ENCODE measurements at regions of chr14 and their contacts with region 1.

Region 1: GRCh38 chr14:97602438-97603117 is 805.4 kb downstream of the VRK1 start:
- DNase-seq: peak; percentile 83 to 94 (median 88)
- H3K4me3 ChIP-seq: peak overlapping the region; percentile 5 to 21
- H3K4me3 Mint-ChIP-seq: no peak overlapping the region
- H3K27ac ChIP-seq: peak overlapping the region; percentile 72
- H3K27ac Mint-ChIP-seq: no peak overlapping the region
- H3K4me1 ChIP-seq: peaks cover 69% of the 10 kb centered on the region
- H3K4me1 Mint-ChIP-seq: peaks cover 4 to 41% (median 19%) of the 10 kb centered on the region in 4 donors
- H3K27me3 ChIP-seq: no peaks in the 10 kb centered on the region
- H3K27me3 Mint-ChIP-seq: no peaks in the 10 kb centered on the region

Region 2: DNA sequence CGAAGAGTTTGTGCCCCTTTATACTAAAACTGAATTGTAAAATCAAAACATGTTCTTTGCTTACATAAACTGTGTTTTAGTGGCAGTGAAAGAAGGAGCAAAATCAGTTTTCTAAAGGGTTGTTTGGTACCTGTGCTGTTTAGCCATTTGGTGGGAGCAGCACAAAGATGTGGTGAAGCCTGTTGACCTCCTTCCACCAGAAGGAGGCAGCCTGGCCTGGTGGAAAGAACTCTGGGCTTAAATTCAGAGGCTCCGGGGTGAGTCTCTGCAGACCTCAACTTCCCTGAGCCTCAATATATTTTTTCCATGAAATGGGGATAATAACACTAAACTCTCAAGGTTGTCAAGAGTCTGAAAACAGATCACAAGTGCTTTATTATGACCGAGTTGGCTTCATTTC is 302.9 kb before region 1 on chr14:
- CTCF ChIA-PET with region 1: interaction called, 4 read pairs
- POLR2A ChIA-PET with region 1: interaction called, 4 read pairs
- intact Hi-C with region 1: loop called (anchors 2 kb)
- DNase-seq: peak in 4 of 5 donors; percentile 21 to 36 (median 24)
- H3K4me3 ChIP-seq: no peak overlapping the region
- H3K4me3 Mint-ChIP-seq: no peak overlapping the region
- H3K27ac ChIP-seq: no peak overlapping the region
- H3K27ac Mint-ChIP-seq: no peak overlapping the region
- H3K4me1 ChIP-seq: no peaks in the 10 kb centered on the region
- H3K4me1 Mint-ChIP-seq: peaks cover 0 to 27% (median 9%) of the 10 kb centered on the region in 4 donors
- H3K27me3 ChIP-seq: no peaks in the 10 kb centered on the region
- H3K27me3 Mint-ChIP-seq: peaks cover 2 to 5% of the 10 kb centered on the region in 2 donors

Region 3: DNA sequence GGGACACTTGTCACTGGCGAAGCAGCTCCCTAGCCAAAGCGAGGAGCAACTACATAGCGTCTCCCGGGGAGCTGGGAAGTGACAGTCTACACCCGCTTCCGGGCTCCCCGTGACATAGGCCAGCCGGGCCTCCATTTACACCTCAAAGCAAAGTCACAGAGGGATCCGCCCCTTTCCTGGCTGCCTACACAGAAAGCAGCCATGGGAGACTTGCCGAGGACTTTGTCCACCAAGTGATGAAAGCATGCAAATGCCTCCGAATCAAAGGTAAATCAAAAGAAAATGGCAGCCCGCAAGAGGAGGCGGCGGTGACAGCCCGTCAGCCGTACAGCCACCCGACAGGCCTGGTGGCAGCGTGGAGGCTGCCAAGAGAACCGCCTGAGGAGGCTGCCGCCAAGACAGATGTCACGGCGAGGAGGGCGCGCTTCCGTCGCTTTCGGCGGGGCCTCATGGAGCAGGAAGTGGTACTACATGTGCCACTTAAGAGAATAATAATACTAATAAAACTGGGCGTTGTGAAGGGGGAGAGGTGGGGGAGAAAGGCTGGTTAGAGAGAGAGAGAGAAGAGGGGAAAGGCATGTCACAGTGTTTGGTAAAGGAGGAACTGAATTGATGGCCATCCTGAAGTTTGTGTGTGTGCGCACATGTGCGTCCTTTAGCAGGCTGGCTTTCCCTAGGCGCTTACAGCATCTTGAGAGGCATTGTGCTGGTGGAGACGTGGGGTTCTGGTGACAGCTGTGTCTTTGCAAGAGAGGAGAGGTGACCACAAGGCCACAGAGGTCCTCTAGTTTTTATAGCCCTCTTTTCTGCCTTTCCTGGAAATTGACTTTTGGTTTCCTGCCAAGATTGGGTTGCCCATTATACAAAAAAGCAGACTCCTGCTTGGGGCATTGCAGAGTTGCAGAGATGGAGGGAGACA is 143.7 kb before region 1 on chr14:
- CTCF ChIA-PET with region 1: interaction called, 10 read pairs
- POLR2A ChIA-PET with region 1: interaction called, 53 read pairs
- intact Hi-C with region 1: loop called (anchors 1 kb)
- DNase-seq: peak; percentile 82 to 91 (median 85)
- H3K4me3 ChIP-seq: peak overlapping the region; percentile 50 to 69
- H3K4me3 Mint-ChIP-seq: peak overlapping the region; percentile 89 to 97 (median 94)
- H3K27ac ChIP-seq: peak overlapping the region; percentile 70
- H3K27ac Mint-ChIP-seq: peak overlapping the region; percentile 91 to 99 (median 97)
- H3K4me1 ChIP-seq: peaks cover 45% of the 10 kb centered on the region
- H3K4me1 Mint-ChIP-seq: peaks cover 28 to 69% (median 50%) of the 10 kb centered on the region in 4 donors
- H3K27me3 ChIP-seq: no peaks in the 10 kb centered on the region
- H3K27me3 Mint-ChIP-seq: no peaks in the 10 kb centered on the region

Region 4: GRCh38 chr14:97536421-97536820 is 66.2 kb before region 1 on chr14:
- CTCF ChIA-PET with region 1: no interaction called
- POLR2A ChIA-PET with region 1: no interaction called
- intact Hi-C with region 1: no loop called
- DNase-seq: no peak
- H3K4me3 ChIP-seq: no peak overlapping the region
- H3K4me3 Mint-ChIP-seq: no peak overlapping the region
- H3K27ac ChIP-seq: no peak overlapping the region
- H3K27ac Mint-ChIP-seq: no peak overlapping the region
- H3K4me1 ChIP-seq: peaks cover 7% of the 10 kb centered on the region
- H3K4me1 Mint-ChIP-seq: peaks cover 11 to 17% (median 15%) of the 10 kb centered on the region in 4 donors
- H3K27me3 ChIP-seq: no peaks in the 10 kb centered on the region
- H3K27me3 Mint-ChIP-seq: no peaks in the 10 kb centered on the region

Region 5: DNA sequence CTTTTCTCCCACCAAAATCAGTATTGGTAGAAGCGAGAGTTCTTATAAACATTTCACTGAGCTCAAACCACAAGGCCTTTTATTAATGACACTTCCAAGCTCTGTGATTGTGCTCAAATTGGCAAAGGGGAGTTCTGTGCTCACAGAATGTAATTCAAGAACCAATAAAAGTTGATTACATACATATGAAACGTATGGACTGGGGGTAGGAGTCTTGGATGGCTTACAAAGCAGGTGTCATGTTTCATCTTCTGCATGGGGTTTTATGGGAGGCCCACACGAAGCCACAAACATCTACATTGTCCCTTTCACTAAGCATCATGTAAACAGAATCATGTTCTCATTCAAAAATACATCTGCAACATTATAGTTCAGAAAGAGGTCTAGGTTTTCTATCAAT is 22.9 kb after region 1 on chr14:
- CTCF ChIA-PET with region 1: interaction called, 10 read pairs
- POLR2A ChIA-PET with region 1: interaction called, 82 read pairs
- intact Hi-C with region 1: loop called (anchors 1 kb)
- DNase-seq: no peak
- H3K4me3 ChIP-seq: no peak overlapping the region
- H3K4me3 Mint-ChIP-seq: no peak overlapping the region
- H3K27ac ChIP-seq: no peak overlapping the region
- H3K27ac Mint-ChIP-seq: peak overlapping the region in 2 of 7 donors; percentile 18 to 26
- H3K4me1 ChIP-seq: peaks cover 11% of the 10 kb centered on the region
- H3K4me1 Mint-ChIP-seq: peaks cover 11 to 33% (median 16%) of the 10 kb centered on the region in 4 donors
- H3K27me3 ChIP-seq: no peaks in the 10 kb centered on the region
- H3K27me3 Mint-ChIP-seq: no peaks in the 10 kb centered on the region

Region 6: DNA sequence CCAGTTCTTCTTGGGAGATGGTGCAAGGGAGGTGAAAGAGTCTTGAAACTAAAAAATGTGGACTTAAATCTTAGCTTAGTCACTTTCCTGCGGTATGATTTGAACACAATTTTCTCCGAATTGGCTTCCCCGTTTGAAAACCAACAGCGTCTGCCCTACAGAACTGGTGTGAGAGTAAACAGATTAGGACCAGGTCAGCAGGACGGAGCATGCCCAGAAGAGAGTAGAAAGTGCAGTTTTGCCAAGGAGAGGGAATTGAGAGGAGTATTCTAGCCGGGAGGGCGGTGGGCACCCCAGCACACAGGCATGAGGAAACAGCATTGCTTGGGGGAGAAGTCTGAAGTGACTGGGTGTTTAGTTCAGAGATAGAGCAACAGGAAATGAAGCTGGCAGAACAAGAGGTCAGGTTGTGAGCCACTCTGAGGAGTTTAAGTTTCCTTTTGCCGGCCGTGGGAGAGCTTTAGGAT is 121.7 kb after region 1 on chr14:
- CTCF ChIA-PET with region 1: no interaction called
- POLR2A ChIA-PET with region 1: interaction called, 26 read pairs
- intact Hi-C with region 1: loop called (anchors 1 kb)
- DNase-seq: peak; percentile 49 to 56 (median 53)
- H3K4me3 ChIP-seq: peak overlapping the region; percentile 0 to 45
- H3K4me3 Mint-ChIP-seq: peak overlapping the region; percentile 78 to 92 (median 85)
- H3K27ac ChIP-seq: peak overlapping the region; percentile 55
- H3K27ac Mint-ChIP-seq: peak overlapping the region; percentile 89 to 98 (median 94)
- H3K4me1 ChIP-seq: peaks cover 57% of the 10 kb centered on the region
- H3K4me1 Mint-ChIP-seq: peaks cover 57 to 76% (median 66%) of the 10 kb centered on the region in 4 donors
- H3K27me3 ChIP-seq: no peaks in the 10 kb centered on the region
- H3K27me3 Mint-ChIP-seq: no peaks in the 10 kb centered on the region

Region 7: DNA sequence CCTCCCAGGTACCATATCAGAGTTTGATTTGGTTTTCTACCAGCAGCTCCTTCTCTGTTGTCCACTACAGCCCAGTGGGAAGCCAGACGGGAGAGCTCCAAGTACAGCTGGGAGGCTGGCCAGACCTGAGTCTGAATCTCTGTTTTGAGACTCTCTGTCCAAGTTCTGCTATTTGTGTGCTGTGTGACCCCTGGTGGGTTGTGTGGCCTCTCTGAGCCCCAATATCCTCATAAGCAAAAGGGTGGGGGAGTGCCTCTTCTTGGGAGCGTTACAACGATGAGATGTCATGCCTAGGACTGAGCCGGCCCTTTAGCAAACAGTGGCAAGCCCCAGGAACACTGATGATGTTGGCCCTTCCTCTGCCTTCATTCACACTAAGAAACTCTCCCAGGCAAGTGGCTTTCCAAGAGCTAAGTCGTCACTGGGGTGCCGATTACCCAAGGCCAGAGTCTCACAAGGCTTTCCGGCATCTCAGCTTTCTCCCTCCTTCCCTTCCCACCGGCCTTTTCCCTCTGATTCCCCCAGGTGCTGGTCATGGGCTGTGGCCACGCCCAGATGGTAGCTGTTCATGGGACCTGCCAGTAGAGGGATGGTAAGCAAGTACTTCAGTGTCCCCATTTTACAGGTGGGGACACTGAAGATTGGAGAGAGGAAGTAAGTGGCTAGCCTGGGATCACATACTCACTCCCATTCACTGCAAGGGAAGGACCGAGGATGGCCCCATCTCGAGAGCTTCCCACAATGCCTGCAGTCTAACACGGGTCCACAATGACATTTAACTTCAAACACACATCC is 1621.7 kb after region 1 on chr14:
- CTCF ChIA-PET with region 1: no interaction called
- POLR2A ChIA-PET with region 1: no interaction called
- intact Hi-C with region 1: no loop called
- DNase-seq: no peak
- H3K4me3 ChIP-seq: no peak overlapping the region
- H3K4me3 Mint-ChIP-seq: peak overlapping the region; percentile 56 to 94 (median 66)
- H3K27ac ChIP-seq: peak overlapping the region; percentile 98
- H3K27ac Mint-ChIP-seq: peak overlapping the region; percentile 94 to 99 (median 99)
- H3K4me1 ChIP-seq: peaks cover 97% of the 10 kb centered on the region
- H3K4me1 Mint-ChIP-seq: peaks cover 81 to 98% (median 92%) of the 10 kb centered on the region in 4 donors
- H3K27me3 ChIP-seq: no peaks in the 10 kb centered on the region
- H3K27me3 Mint-ChIP-seq: no peaks in the 10 kb centered on the region

Measured in CD4-positive, alpha-beta memory T cell (primary cell).